Caco-2 (cell line): ENCODE measurements at regions of chr2 and their contacts with region 1.

Region 1: GRCh38 chr2:61928826-61929461 is 23.5 kb downstream of the COMMD1 start:
- DNase-seq: peak; percentile 74 to 76
- H3K4me3 ChIP-seq: no peak overlapping the region
- H3K4me3 Mint-ChIP-seq: no peak overlapping the region
- H3K27ac Mint-ChIP-seq: peak overlapping the region; percentile 56
- H3K4me1 ChIP-seq: peaks cover 34% of the 10 kb centered on the region
- H3K4me1 Mint-ChIP-seq: peaks cover 29% of the 10 kb centered on the region
- H3K27me3 ChIP-seq: no peaks in the 10 kb centered on the region
- H3K27me3 Mint-ChIP-seq: no peaks in the 10 kb centered on the region
- CTCF ChIP-seq: no peak

Region 2: GRCh38 chr2:61807036-61807757 is 121.7 kb before region 1 on chr2:
- CTCF ChIA-PET with region 1: no interaction called
- POLR2A ChIA-PET with region 1: no interaction called
- intact Hi-C with region 1: no loop called
- DNase-seq: no peak
- H3K4me3 ChIP-seq: no peak overlapping the region
- H3K4me3 Mint-ChIP-seq: no peak overlapping the region
- H3K27ac Mint-ChIP-seq: no peak overlapping the region
- H3K4me1 ChIP-seq: peaks cover 12% of the 10 kb centered on the region; the same call in 1 of the 2 replicates
- H3K4me1 Mint-ChIP-seq: peaks cover 11% of the 10 kb centered on the region
- H3K27me3 ChIP-seq: no peaks in the 10 kb centered on the region
- H3K27me3 Mint-ChIP-seq: peaks cover 5% of the 10 kb centered on the region
- CTCF ChIP-seq: no peak

Region 3: GRCh38 chr2:61962095-61962984 is 33.4 kb after region 1 on chr2:
- CTCF ChIA-PET with region 1: no interaction called
- POLR2A ChIA-PET with region 1: no interaction called
- intact Hi-C with region 1: loop called (anchors 1 kb)
- DNase-seq: peak; percentile 67 to 77
- H3K4me3 ChIP-seq: no peak overlapping the region
- H3K4me3 Mint-ChIP-seq: peak overlapping the region; percentile 44
- H3K27ac Mint-ChIP-seq: peak overlapping the region; percentile 87
- H3K4me1 ChIP-seq: peaks cover 53% of the 10 kb centered on the region
- H3K4me1 Mint-ChIP-seq: peaks cover 27% of the 10 kb centered on the region
- H3K27me3 ChIP-seq: no peaks in the 10 kb centered on the region
- H3K27me3 Mint-ChIP-seq: no peaks in the 10 kb centered on the region
- CTCF ChIP-seq: no peak